H1 (cell line): ENCODE measurements at regions of chr5 and their contacts with region 1.

Region 1: GRCh38 chr5:134932508-134932907 is 27.6 kb downstream of the PCBD2 start:
- DNase-seq: no peak
- H3K4me3 ChIP-seq: no peak overlapping the region
- H3K27ac ChIP-seq: no peak overlapping the region
- H3K4me1 ChIP-seq: no peaks in the 10 kb centered on the region
- H3K27me3 ChIP-seq: no peaks in the 10 kb centered on the region
- CTCF ChIP-seq: no peak
- EP300 ChIP-seq: no peak
- POLR2A ChIP-seq: no peak
- RAD21 ChIP-seq: no peak

Region 2: DNA sequence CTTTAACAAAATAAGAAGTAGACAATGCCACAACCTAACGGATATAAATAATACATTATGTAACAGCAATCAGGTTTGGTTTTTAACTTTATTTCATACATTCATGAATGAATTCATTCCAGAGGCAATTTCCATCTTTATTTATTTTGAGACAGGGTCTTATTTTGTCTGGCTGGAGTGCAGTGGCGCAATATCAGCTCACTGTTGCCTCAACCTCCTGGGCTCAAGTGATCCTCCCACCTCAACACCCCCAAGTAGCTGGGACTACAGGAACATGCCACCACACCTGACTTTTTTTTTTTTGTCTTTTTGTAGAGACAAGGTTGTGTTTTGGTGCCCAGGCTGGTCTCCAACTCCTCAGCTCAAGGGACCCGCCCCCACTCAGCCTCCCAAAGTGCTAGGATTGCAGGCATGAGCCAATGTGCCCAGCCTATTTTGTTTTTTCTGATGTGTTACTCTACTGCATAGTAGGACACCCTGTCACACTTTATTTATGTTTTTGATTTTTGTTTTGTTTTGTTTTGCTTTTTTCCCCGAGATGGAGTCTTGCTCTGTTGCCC is 113.0 kb before region 1 on chr5:
- CTCF ChIA-PET with region 1: no interaction called
- POLR2A ChIA-PET with region 1: no interaction called
- DNase-seq: no peak
- H3K4me3 ChIP-seq: no peak overlapping the region
- H3K27ac ChIP-seq: no peak overlapping the region
- H3K4me1 ChIP-seq: no peaks in the 10 kb centered on the region
- H3K27me3 ChIP-seq: no peaks in the 10 kb centered on the region
- CTCF ChIP-seq: no peak
- EP300 ChIP-seq: no peak
- POLR2A ChIP-seq: no peak
- RAD21 ChIP-seq: no peak

Region 3: DNA sequence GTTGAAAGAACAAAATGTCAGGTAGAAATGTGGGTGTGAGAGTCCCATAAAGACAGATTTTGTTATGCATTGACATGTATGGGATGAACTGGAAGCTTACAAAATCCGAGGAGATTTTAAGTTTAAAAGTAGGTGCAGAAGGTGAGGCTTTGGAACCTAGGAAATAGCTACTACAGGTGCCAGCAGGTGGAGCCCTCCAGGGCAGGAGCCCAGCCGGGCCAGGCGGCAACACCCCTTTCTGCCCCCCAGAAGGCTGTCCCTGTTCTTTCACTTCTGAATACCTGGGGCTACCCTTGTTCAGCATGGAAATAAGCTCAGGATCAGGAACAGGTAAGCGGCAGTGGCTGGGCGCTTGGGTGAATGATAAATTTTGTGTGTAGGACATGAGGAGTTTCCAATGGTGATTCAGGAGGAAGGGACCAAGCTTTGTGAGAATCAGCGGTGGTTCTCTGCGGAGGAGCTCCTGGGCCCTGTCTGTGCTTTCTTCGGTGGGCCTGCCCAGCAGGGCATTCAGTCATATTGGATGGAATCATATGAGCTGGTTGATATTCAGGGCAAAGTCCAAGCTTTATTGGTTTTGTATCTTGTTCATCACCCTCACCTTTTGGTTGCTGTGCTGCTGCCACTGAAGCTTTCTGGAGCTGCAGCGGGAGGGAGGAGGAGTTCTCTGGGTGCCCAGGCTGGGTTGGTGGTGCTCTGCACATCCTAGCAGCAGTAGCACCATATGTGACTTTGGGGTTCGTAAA is 15.3 kb before region 1 on chr5:
- CTCF ChIA-PET with region 1: interaction called, 16 read pairs
- POLR2A ChIA-PET with region 1: interaction called, 8 read pairs
- DNase-seq: peak in 1 of 2 experiments; percentile 67
- H3K4me3 ChIP-seq: no peak overlapping the region
- H3K27ac ChIP-seq: no peak overlapping the region
- H3K4me1 ChIP-seq: no peaks in the 10 kb centered on the region; a peak in 1 of 7 replicates
- H3K27me3 ChIP-seq: no peaks in the 10 kb centered on the region
- CTCF ChIP-seq: peak; percentile 59 to 68 (median 63)
- EP300 ChIP-seq: no peak
- POLR2A ChIP-seq: no peak
- RAD21 ChIP-seq: peak; percentile 61 to 63